Heart right ventricle (tissue), 16 donors: ENCODE measurements at regions of chr5 and their contacts with region 1.

Region 1: GRCh38 chr5:76601470-76601869 is 21.7 kb downstream of the F2RL2 start:
- DNase-seq: peak in 1 of 2 donors; percentile 57
- ATAC-seq: peak in 7 of 8 donors; percentile 47 to 89 (median 66)
- H3K4me3 ChIP-seq: no peak overlapping the region
- H3K27ac ChIP-seq: no peak overlapping the region
- H3K4me1 ChIP-seq: peaks cover 0 to 8% (median 0%) of the 10 kb centered on the region in 9 donors
- H3K27me3 ChIP-seq: no peaks in the 10 kb centered on the region
- CTCF ChIP-seq: peak; percentile 58 to 82 (median 78)

Region 2: DNA sequence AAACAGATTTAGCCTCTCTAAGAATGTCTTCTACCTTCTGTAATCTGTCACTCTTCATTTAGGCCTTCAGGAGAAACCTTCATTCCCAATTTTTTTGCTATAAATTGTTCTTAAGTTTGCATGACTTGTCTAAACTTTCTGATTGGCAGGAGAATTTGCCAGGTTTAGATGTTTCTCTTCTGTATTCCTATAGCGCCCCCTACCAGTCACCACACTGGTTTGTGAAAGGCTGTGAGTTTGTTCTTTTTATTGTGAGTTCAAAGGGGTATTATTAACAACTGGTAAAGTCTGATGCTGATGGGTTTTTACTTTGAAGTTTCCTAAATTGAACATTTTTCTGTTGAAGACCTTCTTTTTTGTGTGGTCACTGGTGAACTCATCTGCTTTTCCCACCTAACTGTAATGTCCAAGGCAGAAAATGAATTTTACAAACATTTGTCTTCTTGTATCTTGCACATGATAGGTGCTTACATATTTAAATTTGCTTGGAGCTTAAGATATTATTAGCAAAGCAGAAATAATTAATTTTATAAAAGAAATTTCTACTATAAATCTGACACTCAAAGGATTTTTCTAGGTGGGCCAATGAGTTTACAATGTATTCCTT is 40.1 kb after region 1 on chr5:
- intact Hi-C with region 1: loop called in 6 of 10 experiments (anchors 1 to 5 kb)
- DNase-seq: peak in 1 of 2 donors; percentile 70
- ATAC-seq: peak in 3 of 8 donors; percentile 38 to 57 (median 54)
- H3K4me3 ChIP-seq: no peak overlapping the region
- H3K27ac ChIP-seq: no peak overlapping the region
- H3K4me1 ChIP-seq: peaks cover 0 to 14% (median 0%) of the 10 kb centered on the region in 9 donors
- H3K27me3 ChIP-seq: no peaks in the 10 kb centered on the region
- CTCF ChIP-seq: peak; percentile 24 to 79 (median 70)

Region 3: GRCh38 chr5:76715736-76716455 is 114.4 kb after region 1 on chr5 and contains the start of gene F2R:
- intact Hi-C with region 1: loop called in 2 of 10 experiments (anchors 10 kb)
- DNase-seq: peak; percentile 67 to 72
- ATAC-seq: peak; percentile 77 to 90 (median 85)
- H3K4me3 ChIP-seq: peak within 1 kb of the TSS; percentile 68 to 98 (median 84)
- H3K27ac ChIP-seq: peak within 1 kb of the TSS; percentile 67 to 93 (median 83)
- H3K4me1 ChIP-seq: peaks cover 0 to 54% (median 32%) of the 10 kb centered on the region in 9 donors
- H3K27me3 ChIP-seq: peaks cover 0 to 42% (median 10%) of the 10 kb centered on the region in 7 donors
- CTCF ChIP-seq: peak; percentile 21 to 75 (median 56)
- total RNA-seq, gene F2R: 6.0 to 20.9 (median 11.1) TPM

Region 4: GRCh38 chr5:76771705-76772405 is 170.4 kb after region 1 on chr5:
- intact Hi-C with region 1: loop called (anchors 1 to 10 kb)
- DNase-seq: no peak
- ATAC-seq: no peak
- H3K4me3 ChIP-seq: no peak overlapping the region
- H3K27ac ChIP-seq: no peak overlapping the region
- H3K4me1 ChIP-seq: peaks cover 0 to 11% (median 0%) of the 10 kb centered on the region in 9 donors
- H3K27me3 ChIP-seq: no peaks in the 10 kb centered on the region
- CTCF ChIP-seq: no peak

Region 5: GRCh38 chr5:77015938-77016569 is 414.6 kb after region 1 on chr5:
- intact Hi-C with region 1: loop called in 5 of 10 experiments (anchors 5 to 10 kb)
- DNase-seq: peak in 1 of 2 donors; percentile 7
- ATAC-seq: peak in 5 of 8 donors; percentile 20 to 48 (median 23)
- H3K4me3 ChIP-seq: no peak overlapping the region
- H3K27ac ChIP-seq: no peak overlapping the region
- H3K4me1 ChIP-seq: no peaks in the 10 kb centered on the region
- H3K27me3 ChIP-seq: peaks cover 0 to 6% (median 0%) of the 10 kb centered on the region in 7 donors
- CTCF ChIP-seq: peak in 7 of 9 donors; percentile 43 to 64 (median 50)